ENCODE measurements at regions of chr10 and their contacts with region 1.

Region 1: DNA sequence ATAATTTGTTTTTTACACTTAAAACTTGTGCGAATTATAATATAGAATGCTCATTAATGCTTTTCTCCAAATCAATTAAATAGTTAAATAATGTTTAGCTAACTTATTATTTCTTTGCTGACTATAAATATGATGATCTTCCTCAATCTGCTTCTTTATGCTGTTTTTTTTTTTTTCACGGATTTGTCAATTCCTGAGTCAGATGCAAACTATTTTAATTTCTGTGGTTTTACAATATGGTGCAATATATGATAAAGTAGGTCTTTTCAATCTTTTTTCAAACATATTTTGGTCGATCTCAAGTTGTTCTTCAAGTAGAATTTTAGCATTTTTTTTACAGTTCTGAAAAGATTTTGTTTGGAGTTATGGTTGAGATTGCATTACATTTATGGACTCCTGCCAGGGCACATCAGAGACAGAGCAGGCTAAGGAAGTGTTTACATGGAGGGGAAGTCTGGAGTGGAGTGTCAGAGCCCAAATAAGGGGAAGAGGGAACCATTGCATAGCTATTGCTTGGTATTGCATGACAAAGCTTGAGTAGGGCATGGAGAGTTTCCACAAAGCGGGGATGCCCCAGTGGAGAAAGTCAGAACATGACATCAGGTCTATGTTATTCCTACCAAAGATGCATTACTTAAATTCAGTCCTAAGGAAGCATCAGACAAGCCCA is 204.4 kb downstream of the OTUD1 start:
- DNase-seq: peak; percentile 1
- ATAC-seq: no peak
- H3K4me3 ChIP-seq: no peak overlapping the region
- H3K4me3 Mint-ChIP-seq: no peak overlapping the region
- H3K27ac ChIP-seq: no peak overlapping the region
- H3K27ac Mint-ChIP-seq: no peak overlapping the region
- H3K4me1 ChIP-seq: no peaks in the 10 kb centered on the region
- H3K4me1 Mint-ChIP-seq: no peaks in the 10 kb centered on the region
- H3K27me3 ChIP-seq: no peaks in the 10 kb centered on the region
- H3K27me3 Mint-ChIP-seq: peaks cover 9% of the 10 kb centered on the region
- CTCF ChIP-seq: no peak

Region 2: GRCh38 chr10:23253780-23254179 is 389.5 kb before region 1 on chr10:
- CTCF ChIA-PET with region 1: no interaction called
- POLR2A ChIA-PET with region 1: no interaction called
- intact Hi-C with region 1: no loop called
- DNase-seq: no peak
- ATAC-seq: no peak
- H3K4me3 ChIP-seq: no peak overlapping the region
- H3K4me3 Mint-ChIP-seq: no peak overlapping the region
- H3K27ac ChIP-seq: no peak overlapping the region
- H3K27ac Mint-ChIP-seq: no peak overlapping the region
- H3K4me1 ChIP-seq: no peaks in the 10 kb centered on the region
- H3K4me1 Mint-ChIP-seq: no peaks in the 10 kb centered on the region
- H3K27me3 ChIP-seq: no peaks in the 10 kb centered on the region
- H3K27me3 Mint-ChIP-seq: no peaks in the 10 kb centered on the region
- CTCF ChIP-seq: no peak

Region 3: GRCh38 chr10:23585186-23585585 is 58.1 kb before region 1 on chr10:
- CTCF ChIA-PET with region 1: no interaction called
- POLR2A ChIA-PET with region 1: no interaction called
- intact Hi-C with region 1: loop called (anchors 5 kb)
- DNase-seq: no peak
- ATAC-seq: no peak
- H3K4me3 ChIP-seq: no peak overlapping the region
- H3K4me3 Mint-ChIP-seq: no peak overlapping the region
- H3K27ac ChIP-seq: no peak overlapping the region
- H3K27ac Mint-ChIP-seq: no peak overlapping the region
- H3K4me1 ChIP-seq: no peaks in the 10 kb centered on the region
- H3K4me1 Mint-ChIP-seq: no peaks in the 10 kb centered on the region
- H3K27me3 ChIP-seq: no peaks in the 10 kb centered on the region
- H3K27me3 Mint-ChIP-seq: no peaks in the 10 kb centered on the region
- CTCF ChIP-seq: no peak

Measured in B cell (primary cell).